ENCODE measurements at regions of chr6 and their contacts with region 1.

Region 1: DNA sequence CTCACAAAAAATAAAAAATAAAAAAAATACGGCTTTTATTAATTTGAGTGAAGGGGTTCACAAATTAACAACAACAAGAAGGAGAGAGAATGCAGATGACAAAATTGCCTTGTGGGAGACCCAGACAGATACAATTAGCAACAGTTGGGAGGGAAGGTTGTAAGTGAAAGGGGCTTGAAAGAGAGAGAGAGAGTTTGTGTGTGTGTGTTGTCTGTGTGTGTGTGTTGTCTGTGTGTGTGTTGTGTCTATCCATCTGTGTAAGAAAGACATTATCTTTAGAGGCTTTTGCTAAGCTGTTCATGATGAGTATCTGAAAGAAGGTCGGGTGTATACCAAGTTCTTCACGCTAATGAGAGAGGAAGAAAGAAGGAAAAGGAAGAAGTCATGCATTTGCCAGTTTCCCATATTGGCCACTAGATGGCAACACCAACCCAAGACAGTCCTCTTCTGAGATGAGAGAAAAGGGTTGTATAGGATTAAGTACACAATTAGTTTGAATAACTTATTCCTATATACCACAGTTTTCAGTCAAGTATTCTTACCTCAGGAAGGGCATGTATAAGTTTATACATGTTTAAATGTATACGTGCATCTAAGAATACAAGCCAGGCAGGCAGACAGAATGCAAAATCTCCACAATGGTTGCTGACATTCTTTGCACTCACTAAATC is 63.7 kb upstream of the CD2AP start:
- DNase-seq: peak; percentile 73
- H3K4me3 ChIP-seq: peak overlapping the region; percentile 79
- H3K27ac ChIP-seq: peak overlapping the region; percentile 43
- H3K4me1 ChIP-seq: no peaks in the 10 kb centered on the region
- H3K27me3 ChIP-seq: no peaks in the 10 kb centered on the region

Region 2: GRCh38 chr6:49409951-49410542 is 1996.2 kb after region 1 on chr6:
- in situ Hi-C with region 1: loop called (anchors 25 kb)
- DNase-seq: peak; percentile 71
- H3K4me3 ChIP-seq: no peak overlapping the region; the same call in 1 of the 2 replicates
- H3K27ac ChIP-seq: no peak overlapping the region
- H3K4me1 ChIP-seq: no peaks in the 10 kb centered on the region
- H3K27me3 ChIP-seq: no peaks in the 10 kb centered on the region

Measured in GM23248 (cell line).